IMR-90 (cell line): ENCODE measurements at regions of chr15 and their contacts with region 1.

Region 1: DNA sequence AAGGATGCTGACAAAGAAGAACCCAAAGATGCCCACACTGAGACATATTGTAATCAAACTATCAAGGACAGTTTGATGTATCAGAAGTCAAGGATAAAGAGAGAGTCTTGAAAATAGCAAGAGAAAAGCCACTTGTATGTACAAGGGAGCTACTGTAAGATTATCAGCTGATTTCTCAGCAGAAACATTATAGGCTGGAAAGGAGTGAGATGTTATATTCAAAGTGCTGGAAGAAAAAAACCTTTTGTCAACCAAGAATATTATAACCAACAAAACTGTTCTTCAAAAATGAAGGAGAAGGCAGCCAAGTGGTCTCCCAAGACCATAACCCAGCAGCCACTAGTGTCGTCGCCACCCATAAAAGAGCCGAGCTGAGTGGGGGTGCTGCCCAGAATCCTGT is 93.2 kb downstream of the KLF13 start:
- DNase-seq: no peak
- ATAC-seq: no peak
- H3K4me3 ChIP-seq: no peak overlapping the region
- H3K27ac ChIP-seq: no peak overlapping the region
- H3K4me1 ChIP-seq: no peaks in the 10 kb centered on the region
- H3K27me3 ChIP-seq: no peaks in the 10 kb centered on the region
- CTCF ChIP-seq: no peak
- POLR2A ChIP-seq: no peak
- RAD21 ChIP-seq: no peak

Region 2: GRCh38 chr15:31311735-31312619 is 107.8 kb before region 1 on chr15:
- CTCF ChIA-PET with region 1: no interaction called
- POLR2A ChIA-PET with region 1: no interaction called
- dilution Hi-C with region 1: no loop called
- in situ Hi-C with region 1: no loop called
- intact Hi-C with region 1: no loop called
- DNase-seq: no peak
- ATAC-seq: no peak
- H3K4me3 ChIP-seq: no peak overlapping the region
- H3K27ac ChIP-seq: no peak overlapping the region
- H3K4me1 ChIP-seq: no peaks in the 10 kb centered on the region
- H3K27me3 ChIP-seq: peaks cover 33% of the 10 kb centered on the region
- CTCF ChIP-seq: no peak
- POLR2A ChIP-seq: no peak
- RAD21 ChIP-seq: no peak

Region 3: GRCh38 chr15:31563421-31563820 is 143.6 kb after region 1 on chr15:
- CTCF ChIA-PET with region 1: no interaction called
- POLR2A ChIA-PET with region 1: interaction called, 19 read pairs
- dilution Hi-C with region 1: no loop called
- in situ Hi-C with region 1: no loop called
- intact Hi-C with region 1: no loop called
- DNase-seq: no peak
- ATAC-seq: no peak
- H3K4me3 ChIP-seq: no peak overlapping the region
- H3K27ac ChIP-seq: no peak overlapping the region
- H3K4me1 ChIP-seq: no peaks in the 10 kb centered on the region
- H3K27me3 ChIP-seq: no peaks in the 10 kb centered on the region
- CTCF ChIP-seq: no peak
- POLR2A ChIP-seq: no peak
- RAD21 ChIP-seq: no peak